OCI-LY7 (cell line): ENCODE measurements at regions of chr7 and their contacts with region 1.

Region 1: GRCh38 chr7:92833024-92833765 is 3.2 kb downstream of the CDK6 start:
- DNase-seq: peak; percentile 93
- H3K4me3 ChIP-seq: peak overlapping the region; percentile 77
- H3K27ac ChIP-seq: peak overlapping the region; percentile 86
- H3K4me1 ChIP-seq: peaks cover 30% of the 10 kb centered on the region
- CTCF ChIP-seq: peak; percentile 81

Region 2: DNA sequence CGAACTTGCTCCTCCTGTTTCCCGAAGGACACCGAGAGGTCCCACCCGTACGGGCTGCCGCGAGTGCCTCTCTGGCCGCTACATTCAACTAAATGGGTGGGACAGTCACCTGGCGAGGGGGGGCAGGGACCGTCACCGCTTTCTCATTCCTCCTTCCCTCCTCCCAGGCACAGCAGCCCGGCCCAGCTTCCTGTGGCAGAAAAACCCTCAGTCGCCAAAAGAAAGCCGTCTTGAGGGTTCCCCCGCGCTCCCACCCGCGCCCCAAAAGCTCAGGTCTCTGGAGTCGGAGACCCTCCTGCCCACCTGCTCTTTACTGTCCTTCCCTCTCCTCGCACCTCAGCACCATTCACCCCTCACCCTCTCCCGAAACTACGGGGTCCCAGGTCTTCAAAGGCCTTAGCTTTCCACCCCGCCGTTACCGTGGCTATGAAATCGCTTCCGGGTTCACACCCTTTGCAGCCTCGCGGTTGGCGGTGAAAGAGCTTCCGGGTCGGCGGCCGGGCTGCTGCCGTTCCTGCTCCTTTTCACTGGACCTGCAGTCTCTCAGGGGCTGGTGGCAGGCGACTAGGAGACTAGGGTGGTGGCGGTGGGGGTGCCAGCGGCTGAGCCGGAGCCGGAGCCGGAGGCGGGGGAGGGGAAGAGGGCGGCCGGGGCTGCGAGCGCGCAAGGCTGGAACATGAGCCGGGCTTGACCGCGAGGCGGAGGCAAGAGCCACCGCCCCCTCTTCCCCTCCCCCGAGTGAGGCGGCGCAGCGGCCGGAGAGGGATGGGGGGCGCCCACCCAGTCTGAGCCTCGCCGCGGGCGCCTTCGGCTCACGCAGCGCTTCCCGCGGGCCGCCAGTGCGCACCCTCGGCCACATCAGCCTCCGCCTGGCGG is 587.5 kb before region 1 on chr7 and contains the starts of genes ANKIB1 and KRIT1:
- CTCF ChIA-PET with region 1: no interaction called
- POLR2A ChIA-PET with region 1: no interaction called
- intact Hi-C with region 1: loop called (anchors 10 kb)
- DNase-seq: peak; percentile 92
- H3K4me3 ChIP-seq: peak within 1 kb of the TSS; percentile 89
- H3K27ac ChIP-seq: peak within 1 kb of the TSS; percentile 76
- H3K4me1 ChIP-seq: peaks cover 23% of the 10 kb centered on the region
- CTCF ChIP-seq: peak; percentile 27; the same call in 1 of the 2 replicates
- total RNA-seq, gene ANKIB1: 15.4 and 25.3 TPM in 2 replicates
- total RNA-seq, gene KRIT1: 35.7 and 50.0 TPM in 2 replicates

Region 3: DNA sequence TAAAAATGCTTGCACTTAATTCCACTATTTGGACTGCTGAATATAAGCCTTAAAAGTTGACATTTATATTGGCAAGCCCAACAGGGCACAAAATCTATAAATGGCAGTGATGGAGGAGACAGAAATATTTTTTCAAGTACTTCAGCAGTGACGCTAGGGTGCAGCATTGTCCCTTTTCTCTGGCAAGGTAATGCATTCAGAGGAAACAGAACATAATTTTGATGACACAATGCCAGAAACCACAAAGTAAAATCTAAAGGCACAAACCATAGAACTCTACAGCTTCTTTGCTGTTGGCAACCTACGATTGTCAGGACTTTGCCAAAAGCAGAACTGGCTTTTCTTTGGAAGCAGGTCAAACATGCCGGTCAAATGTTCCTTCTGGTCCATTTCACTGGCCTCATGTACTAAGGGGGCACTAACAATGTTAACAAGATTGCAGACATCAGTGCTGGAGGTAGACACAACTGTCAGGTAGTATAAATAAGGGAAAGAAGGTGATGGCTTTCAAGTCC is 212.1 kb before region 1 on chr7:
- CTCF ChIA-PET with region 1: interaction called, 3 read pairs
- POLR2A ChIA-PET with region 1: no interaction called
- intact Hi-C with region 1: loop called (anchors 1 kb)
- DNase-seq: peak; percentile 82
- H3K4me3 ChIP-seq: no peak overlapping the region
- H3K27ac ChIP-seq: no peak overlapping the region
- H3K4me1 ChIP-seq: peaks cover 21% of the 10 kb centered on the region
- CTCF ChIP-seq: peak; percentile 91

Region 4: GRCh38 chr7:92809397-92810241 is 23.6 kb before region 1 on chr7:
- CTCF ChIA-PET with region 1: interaction called, 5 read pairs
- POLR2A ChIA-PET with region 1: interaction called, 14 read pairs
- intact Hi-C with region 1: loop called (anchors 1 kb)
- DNase-seq: peak; percentile 80
- H3K4me3 ChIP-seq: peak overlapping the region; percentile 19
- H3K27ac ChIP-seq: peak overlapping the region; percentile 74
- H3K4me1 ChIP-seq: peaks cover 66% of the 10 kb centered on the region
- CTCF ChIP-seq: no peak

Region 5: GRCh38 chr7:92823042-92823441 is 10.2 kb before region 1 on chr7:
- CTCF ChIA-PET with region 1: interaction called, 3 read pairs
- POLR2A ChIA-PET with region 1: interaction called, 45 read pairs
- intact Hi-C with region 1: no loop called
- DNase-seq: no peak
- H3K4me3 ChIP-seq: no peak overlapping the region
- H3K27ac ChIP-seq: no peak overlapping the region
- H3K4me1 ChIP-seq: peaks cover 30% of the 10 kb centered on the region
- CTCF ChIP-seq: no peak

Region 6: GRCh38 chr7:92953657-92954056 is 120.5 kb after region 1 on chr7:
- CTCF ChIA-PET with region 1: no interaction called
- POLR2A ChIA-PET with region 1: no interaction called
- intact Hi-C with region 1: no loop called
- DNase-seq: no peak
- H3K4me3 ChIP-seq: no peak overlapping the region
- H3K27ac ChIP-seq: no peak overlapping the region
- H3K4me1 ChIP-seq: no peaks in the 10 kb centered on the region
- CTCF ChIP-seq: no peak

Region 7: DNA sequence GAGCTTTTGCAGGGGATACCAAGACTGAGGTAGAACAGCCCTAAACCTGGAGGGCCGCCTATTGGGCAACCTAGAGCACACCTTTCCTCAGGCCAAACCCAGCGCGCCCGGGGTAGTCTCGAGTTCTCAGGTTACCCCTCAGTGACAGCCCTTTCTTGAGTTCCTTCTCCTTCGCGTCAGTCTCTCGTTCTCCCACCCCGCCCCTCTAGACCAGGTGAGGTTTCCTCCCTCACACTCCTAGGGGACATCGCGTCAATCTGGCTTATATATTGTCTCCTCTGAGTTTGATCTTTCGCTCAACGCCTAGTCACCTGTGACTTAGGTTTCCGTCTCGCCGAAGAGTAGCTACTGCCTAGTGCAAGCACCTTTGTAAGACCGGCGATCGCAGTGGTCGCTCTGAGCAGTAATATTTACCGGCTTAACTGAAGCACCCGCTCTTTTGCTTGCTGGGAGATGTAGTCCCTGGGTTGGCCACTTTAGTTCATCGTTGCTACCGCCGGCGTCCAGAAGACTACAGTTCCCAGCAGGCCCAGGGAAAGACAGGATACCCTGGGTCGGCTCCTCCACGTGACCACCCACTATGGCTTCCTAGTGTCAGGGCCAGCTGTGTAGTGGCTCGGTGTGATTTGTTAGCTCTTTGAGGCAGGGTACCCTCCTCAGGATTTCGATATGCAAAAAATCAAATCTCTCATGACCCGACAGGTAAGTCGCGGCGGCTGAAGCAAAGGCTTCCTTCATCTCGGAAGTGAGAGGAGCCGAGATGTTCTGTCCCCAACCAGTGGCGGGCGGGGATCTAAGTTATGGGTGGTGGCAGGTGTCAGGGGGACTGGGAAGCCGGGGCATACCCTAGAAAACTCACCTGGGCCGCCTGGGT is 398.8 kb after region 1 on chr7 and contains the start of gene VPS50:
- CTCF ChIA-PET with region 1: no interaction called
- POLR2A ChIA-PET with region 1: no interaction called
- intact Hi-C with region 1: loop called (anchors 10 kb)
- DNase-seq: peak; percentile 95
- H3K4me3 ChIP-seq: peak within 1 kb of the TSS; percentile 96
- H3K27ac ChIP-seq: peak within 1 kb of the TSS; percentile 44
- H3K4me1 ChIP-seq: peaks cover 25% of the 10 kb centered on the region
- CTCF ChIP-seq: no peak
- total RNA-seq, gene VPS50: 14.9 and 17.9 TPM in 2 replicates